GM10248 (cell line): ENCODE measurements at regions of chr9 and their contacts with region 1.

Region 1: DNA sequence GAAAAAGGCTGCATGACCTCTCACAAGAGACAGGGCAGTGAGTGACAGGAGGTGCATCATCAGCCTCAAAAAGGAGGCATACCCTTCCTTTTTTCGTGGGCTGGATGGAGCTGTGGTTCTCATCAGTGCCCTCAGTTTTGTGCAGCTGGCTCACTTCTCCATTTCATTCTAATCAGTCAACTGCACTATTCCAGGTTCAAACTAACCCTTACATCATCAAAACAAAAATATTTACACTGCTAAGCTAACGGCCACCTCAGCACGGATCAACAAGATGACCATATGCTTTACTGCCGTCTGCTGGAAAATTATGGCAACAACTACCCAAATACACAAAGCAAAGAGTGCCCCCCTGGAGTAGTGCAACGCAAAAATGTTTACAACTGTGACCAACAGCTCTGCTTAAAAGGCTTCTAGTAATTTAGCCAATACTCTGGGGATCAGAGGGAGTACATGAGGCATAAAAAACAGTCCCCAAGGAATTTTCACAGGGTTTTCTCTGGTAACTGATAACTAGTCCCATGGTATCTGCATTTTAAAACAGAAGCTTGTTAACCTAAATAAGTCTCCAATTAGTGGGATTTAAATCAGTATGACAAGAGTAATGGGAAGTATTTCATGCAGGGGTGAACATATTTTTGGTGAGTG is 10.8 kb downstream of the KCNV2 start:
- DNase-seq: peak; percentile 22
- CTCF ChIP-seq: peak; percentile 61

Region 2: DNA sequence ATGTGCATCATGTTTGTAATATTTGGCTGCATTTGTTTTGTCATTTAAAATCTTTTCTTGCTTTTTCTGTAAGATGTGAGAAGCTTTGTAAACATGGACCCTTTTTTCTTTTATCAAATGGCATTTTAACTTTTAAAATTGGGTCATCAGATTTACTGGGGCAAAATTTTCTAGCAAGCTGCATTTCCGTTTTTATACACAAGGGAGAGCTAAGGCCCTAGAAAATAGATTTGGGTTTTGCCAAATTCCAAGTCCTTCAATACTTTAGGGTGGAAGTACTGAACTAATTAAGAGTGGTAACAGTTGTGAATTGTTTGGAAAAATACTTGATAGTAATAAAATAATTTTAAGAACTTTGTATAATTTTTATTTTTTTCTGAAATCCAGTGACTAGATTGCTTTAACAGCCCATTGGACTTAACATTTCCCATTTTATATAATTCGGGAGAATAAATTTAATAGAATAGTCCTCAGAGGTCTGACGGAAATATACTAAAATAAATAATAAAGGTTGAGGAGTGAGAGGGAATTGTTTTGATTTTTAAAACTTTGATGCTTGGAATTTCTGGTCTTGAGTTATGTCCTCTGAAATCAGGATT is 595.5 kb before region 1 on chr9:
- CTCF ChIA-PET with region 1: interaction called, 23 read pairs
- POLR2A ChIA-PET with region 1: no interaction called
- DNase-seq: peak; percentile 17
- CTCF ChIP-seq: peak; percentile 40

Region 3: DNA sequence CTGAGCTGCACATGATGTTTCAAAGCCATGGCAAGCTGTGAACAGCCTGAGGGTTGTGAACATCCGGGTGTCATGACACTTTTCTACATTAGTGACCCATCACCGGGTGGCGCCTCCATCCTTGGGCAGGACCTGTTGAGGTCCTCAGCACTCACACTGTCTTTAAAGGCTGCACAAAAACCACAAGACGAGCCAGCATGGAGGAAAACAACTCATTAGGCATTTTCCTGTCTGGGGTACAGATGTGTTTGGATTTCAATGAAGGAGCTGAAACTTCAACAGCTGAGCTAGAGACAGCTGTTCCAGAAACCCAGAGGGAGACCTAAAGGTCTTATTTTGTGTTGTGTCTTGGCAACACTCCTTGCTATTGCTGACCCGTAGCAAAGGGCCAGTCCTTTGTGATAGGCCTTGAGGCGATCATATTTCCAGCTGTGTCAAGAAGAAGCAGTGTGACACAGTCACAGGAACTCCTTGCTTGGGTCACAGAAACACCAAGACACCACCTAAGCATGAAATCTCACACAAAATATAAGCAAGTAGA is 258.3 kb before region 1 on chr9:
- CTCF ChIA-PET with region 1: interaction called, 20 read pairs
- POLR2A ChIA-PET with region 1: no interaction called
- DNase-seq: peak; percentile 12
- CTCF ChIP-seq: peak; percentile 39

Region 4: DNA sequence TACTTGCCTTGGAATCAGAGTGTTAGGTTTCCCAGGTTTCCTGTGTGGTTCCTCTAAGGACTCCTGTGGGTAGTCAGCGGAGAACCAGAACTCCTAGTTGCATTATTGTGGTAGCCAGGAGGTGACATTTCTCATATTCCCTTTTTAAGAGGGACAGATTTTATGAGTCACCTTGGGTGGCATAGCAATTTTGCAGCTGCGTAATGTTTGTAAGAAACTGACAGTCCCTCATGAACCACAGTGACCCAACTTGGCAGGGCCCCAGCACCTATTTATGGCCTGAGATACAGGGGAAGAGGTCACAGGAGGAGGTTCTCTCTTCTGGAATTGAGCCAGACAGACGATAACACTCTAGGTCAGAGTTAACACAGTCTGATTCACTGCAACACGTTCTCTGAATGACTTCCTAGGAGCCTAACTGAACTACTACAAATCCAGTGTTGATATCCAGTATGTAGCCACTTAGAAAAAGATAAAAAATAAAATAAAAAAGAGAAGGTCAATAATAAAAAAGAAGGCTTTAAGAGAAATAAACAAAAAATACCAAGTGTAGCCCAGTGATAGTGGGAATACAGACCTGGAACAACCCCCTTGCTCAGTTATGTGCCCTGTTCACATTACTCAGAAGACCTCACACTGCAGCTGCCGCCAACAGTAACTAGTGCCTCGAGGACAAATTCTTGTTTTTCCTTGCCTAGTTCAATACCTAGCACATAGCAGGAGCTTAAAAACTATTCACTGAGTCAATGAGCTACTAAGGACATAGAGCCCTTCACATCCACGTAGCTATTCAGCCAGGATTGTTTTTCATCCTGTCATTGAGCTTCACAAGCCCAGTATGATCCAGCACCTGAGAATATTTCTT is 157.2 kb before region 1 on chr9:
- CTCF ChIA-PET with region 1: no interaction called
- POLR2A ChIA-PET with region 1: no interaction called
- DNase-seq: peak; percentile 10
- CTCF ChIP-seq: no peak

Region 5: GRCh38 chr9:2676466-2676865 is 51.6 kb before region 1 on chr9:
- CTCF ChIA-PET with region 1: no interaction called
- POLR2A ChIA-PET with region 1: no interaction called
- DNase-seq: no peak
- CTCF ChIP-seq: no peak

Region 6: GRCh38 chr9:2709645-2710101 is 18.4 kb before region 1 on chr9:
- CTCF ChIA-PET with region 1: interaction called, 10 read pairs
- POLR2A ChIA-PET with region 1: no interaction called
- DNase-seq: no peak
- CTCF ChIP-seq: no peak

Region 7: DNA sequence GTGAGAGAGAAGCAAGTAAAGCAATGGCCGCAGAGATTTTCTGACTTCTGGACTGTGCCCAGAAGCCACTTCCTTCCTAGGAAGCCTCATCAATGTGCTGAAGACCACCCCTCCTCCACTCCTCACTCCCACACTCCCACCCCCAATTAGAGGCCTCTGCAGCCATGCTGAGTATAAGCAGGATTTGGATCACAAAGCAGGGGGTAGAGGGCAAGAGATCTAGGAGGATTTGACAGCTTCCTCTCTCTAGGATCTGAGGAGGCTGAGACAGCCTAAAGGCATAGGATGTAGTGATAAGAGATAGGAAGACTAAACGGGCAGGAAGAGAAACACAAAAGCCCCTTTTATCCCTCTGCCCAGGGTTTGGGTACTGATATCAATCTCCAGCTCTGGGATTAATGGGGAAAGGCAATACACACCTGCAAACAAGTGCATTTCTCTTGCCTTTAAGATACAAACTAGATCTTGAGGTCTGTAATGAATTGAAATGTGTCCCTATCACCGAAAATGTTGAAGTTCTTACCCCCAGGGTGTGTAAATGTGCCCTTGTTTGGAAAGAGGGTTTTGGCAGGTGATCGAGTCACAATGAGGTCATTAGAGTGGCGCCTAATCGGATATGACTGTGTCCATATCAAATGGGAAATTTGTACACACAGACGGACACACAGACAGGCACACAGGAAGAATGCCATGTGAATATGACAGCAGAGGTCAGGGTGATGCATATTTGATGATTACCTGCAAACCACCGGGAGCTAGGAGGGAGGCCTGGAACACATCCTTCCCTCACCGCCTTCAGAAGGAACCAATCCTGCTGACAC is 17.7 kb after region 1 on chr9:
- CTCF ChIA-PET with region 1: interaction called, 33 read pairs
- POLR2A ChIA-PET with region 1: interaction called, 3 read pairs
- DNase-seq: no peak
- CTCF ChIP-seq: no peak

Region 8: GRCh38 chr9:2872257-2872935 is 144.3 kb after region 1 on chr9:
- CTCF ChIA-PET with region 1: no interaction called
- POLR2A ChIA-PET with region 1: no interaction called
- DNase-seq: no peak
- CTCF ChIP-seq: peak; percentile 45

Region 9: DNA sequence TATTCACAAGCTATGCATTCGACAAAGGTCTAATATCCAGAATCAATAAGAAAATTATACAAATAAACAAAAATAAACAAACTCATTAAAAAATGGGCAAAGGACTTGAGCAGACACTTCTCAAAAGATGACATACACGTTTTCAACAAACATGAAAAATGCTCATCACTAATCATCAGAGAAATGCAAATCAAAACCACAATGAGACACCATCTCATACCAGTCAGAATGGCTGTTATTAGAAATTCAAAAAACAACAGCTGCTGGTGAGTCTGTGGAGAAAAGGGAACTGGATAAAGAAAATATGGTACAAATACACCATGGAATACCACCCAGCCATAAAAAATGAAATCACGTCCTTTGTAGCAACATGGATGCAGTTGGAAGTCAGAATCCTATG is 160.9 kb after region 1 on chr9:
- CTCF ChIA-PET with region 1: no interaction called
- POLR2A ChIA-PET with region 1: no interaction called
- DNase-seq: no peak
- CTCF ChIP-seq: no peak